A673 (cell line): ENCODE measurements at regions of chr17 and their contacts with region 1.

Region 1: GRCh38 chr17:5468075-5468473 is 708 bp downstream of the DHX33 start:
- DNase-seq: no peak
- H3K4me3 ChIP-seq: peak overlapping the region; percentile 94
- H3K27ac ChIP-seq: peak overlapping the region; percentile 78
- H3K4me1 ChIP-seq: no peaks in the 10 kb centered on the region
- H3K27me3 ChIP-seq: no peaks in the 10 kb centered on the region
- CTCF ChIP-seq: no peak

Region 2: DNA sequence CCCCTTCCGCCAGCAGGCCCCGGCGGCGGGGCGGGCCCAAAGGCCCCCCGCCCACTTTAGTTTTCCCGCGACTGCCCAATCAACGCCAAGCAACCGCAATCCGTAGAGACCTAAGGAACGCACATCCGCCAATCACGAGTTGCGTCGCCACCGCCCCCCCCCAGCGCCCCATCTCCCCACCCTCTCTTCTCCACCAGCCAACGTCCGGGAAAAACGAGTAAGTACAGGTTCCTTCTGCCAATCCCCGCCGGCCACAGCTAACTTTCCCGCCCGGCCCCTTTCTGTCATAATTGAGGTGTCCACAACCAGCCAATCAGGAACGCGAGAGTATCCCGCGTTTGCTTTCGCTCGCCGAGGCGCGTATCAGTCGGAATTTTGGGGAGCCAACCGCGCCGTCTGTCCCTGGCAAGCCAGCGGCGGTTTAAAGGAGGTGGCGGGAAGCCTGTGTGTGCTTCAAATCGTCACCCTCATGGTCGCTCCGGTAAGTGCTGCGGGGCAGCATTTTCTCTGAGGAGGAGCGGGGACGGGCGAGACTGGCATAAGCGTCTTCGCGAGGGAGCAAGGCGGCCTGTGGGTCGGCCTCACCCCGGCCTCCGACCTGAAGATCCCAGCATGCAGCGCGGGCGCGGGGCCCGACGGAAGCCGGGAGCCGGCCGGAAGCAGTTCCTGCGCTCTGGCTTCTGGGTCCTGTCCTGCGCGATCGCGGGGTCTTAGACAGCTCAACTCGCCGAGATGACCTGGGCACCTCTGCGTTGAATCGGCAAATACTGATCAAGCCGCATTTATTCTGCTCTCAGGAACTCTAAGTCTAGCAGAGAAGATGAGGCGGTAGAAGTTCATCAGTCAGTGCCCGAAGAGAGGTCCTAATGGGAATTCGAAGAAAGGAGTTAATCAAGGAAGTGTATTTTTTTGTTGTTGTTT is 18.4 kb after region 1 on chr17 and contains the start of gene MIS12:
- CTCF ChIA-PET with region 1: no interaction called
- POLR2A ChIA-PET with region 1: interaction called, 3 read pairs
- intact Hi-C with region 1: loop called (anchors 1 kb)
- DNase-seq: peak; percentile 100
- H3K4me3 ChIP-seq: peak within 1 kb of the TSS; percentile 80
- H3K27ac ChIP-seq: peak within 1 kb of the TSS; percentile 99
- H3K4me1 ChIP-seq: peaks cover 14% of the 10 kb centered on the region
- H3K27me3 ChIP-seq: no peaks in the 10 kb centered on the region
- CTCF ChIP-seq: no peak
- total RNA-seq, gene MIS12: 30.6 and 33.9 TPM in 2 replicates